Activated T-helper 2 cell treated with anti-CD3 and anti-CD28 coated beads, Interferon-gamma antibody, Interleukin-2, Interleukin-4, amounts not matched to agents 10 μg/mL and 5 μg/mL and 100 μg/mL, durations not matched to agents 14 hours and 24 hours and 36 hours (primary cell): ENCODE measurements at regions of chr3 and their contacts with region 1.

Region 1: DNA sequence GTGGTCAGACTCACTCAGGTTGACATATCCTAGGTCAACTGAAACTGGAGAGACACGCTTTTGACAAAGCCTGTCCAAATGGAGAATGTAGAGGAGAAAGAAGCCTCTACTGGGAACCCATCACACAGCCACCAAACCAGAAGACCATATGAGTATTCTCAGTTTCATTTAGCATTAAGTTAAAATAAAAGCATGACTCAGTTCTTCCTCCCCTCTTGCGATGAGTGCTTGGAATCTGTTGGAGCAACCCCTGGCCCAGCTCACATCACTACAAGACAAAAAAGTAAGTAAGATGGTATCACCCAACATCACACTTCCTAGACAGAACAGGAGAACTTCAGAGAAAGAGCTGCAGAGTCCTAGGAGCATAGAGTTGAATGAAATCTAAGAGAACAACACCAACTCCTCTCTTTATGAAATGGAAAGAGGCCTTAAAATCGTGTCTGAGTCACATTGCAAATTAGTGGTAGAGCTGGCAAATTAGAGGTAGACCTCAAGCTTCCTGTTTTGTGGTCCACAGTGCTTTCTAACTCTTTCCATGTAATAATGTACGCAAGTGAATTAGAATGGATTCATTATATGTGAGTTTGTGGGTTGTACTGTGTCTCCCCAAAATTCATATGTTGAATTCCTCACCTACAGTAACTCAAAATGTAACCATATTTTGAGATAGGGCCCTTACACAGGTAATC is 51.2 kb downstream of the FGF12 start:
- DNase-seq: no peak
- H3K4me3 Mint-ChIP-seq: no peak overlapping the region
- H3K27ac Mint-ChIP-seq: peak overlapping the region; percentile 90
- H3K4me1 Mint-ChIP-seq: peaks cover 11% of the 10 kb centered on the region
- H3K27me3 Mint-ChIP-seq: peaks cover 22% of the 10 kb centered on the region

Region 2: GRCh38 chr3:192621909-192622308 is 54.2 kb before region 1 on chr3:
- intact Hi-C with region 1: no loop called
- DNase-seq: no peak
- H3K4me3 Mint-ChIP-seq: no peak overlapping the region
- H3K27ac Mint-ChIP-seq: no peak overlapping the region
- H3K4me1 Mint-ChIP-seq: no peaks in the 10 kb centered on the region
- H3K27me3 Mint-ChIP-seq: no peaks in the 10 kb centered on the region

Region 3: GRCh38 chr3:192892981-192893700 is 217.0 kb after region 1 on chr3:
- intact Hi-C with region 1: loop called (anchors 2 kb)
- DNase-seq: peak; percentile 77
- H3K4me3 Mint-ChIP-seq: peak overlapping the region; percentile 34
- H3K27ac Mint-ChIP-seq: peak overlapping the region; percentile 82
- H3K4me1 Mint-ChIP-seq: peaks cover 79% of the 10 kb centered on the region
- H3K27me3 Mint-ChIP-seq: peaks cover 10% of the 10 kb centered on the region

Region 4: DNA sequence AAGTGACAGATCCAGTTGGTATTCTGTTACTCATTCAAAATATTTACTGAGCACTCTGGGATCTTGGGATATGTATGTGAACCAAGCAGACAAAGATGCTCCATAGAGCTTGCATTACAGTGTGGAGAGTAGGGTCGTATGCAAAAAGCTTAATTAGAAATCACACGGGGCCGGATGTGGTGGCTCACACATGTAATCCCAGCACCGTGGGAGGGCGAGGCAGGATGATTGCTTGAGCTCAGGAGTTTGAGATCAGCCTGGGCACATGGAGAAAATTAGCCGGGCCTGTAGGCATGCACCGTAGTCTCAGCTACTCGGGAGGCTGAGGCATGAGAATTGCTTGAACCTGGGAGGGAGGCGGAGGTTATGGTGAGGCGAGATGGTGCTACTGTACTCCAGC is 310.3 kb after region 1 on chr3:
- intact Hi-C with region 1: loop called (anchors 10 kb)
- DNase-seq: no peak
- H3K4me3 Mint-ChIP-seq: no peak overlapping the region
- H3K27ac Mint-ChIP-seq: no peak overlapping the region
- H3K4me1 Mint-ChIP-seq: no peaks in the 10 kb centered on the region
- H3K27me3 Mint-ChIP-seq: peaks cover 3% of the 10 kb centered on the region